ENCODE measurements at regions of chr4 and their contacts with region 1.

Region 1: DNA sequence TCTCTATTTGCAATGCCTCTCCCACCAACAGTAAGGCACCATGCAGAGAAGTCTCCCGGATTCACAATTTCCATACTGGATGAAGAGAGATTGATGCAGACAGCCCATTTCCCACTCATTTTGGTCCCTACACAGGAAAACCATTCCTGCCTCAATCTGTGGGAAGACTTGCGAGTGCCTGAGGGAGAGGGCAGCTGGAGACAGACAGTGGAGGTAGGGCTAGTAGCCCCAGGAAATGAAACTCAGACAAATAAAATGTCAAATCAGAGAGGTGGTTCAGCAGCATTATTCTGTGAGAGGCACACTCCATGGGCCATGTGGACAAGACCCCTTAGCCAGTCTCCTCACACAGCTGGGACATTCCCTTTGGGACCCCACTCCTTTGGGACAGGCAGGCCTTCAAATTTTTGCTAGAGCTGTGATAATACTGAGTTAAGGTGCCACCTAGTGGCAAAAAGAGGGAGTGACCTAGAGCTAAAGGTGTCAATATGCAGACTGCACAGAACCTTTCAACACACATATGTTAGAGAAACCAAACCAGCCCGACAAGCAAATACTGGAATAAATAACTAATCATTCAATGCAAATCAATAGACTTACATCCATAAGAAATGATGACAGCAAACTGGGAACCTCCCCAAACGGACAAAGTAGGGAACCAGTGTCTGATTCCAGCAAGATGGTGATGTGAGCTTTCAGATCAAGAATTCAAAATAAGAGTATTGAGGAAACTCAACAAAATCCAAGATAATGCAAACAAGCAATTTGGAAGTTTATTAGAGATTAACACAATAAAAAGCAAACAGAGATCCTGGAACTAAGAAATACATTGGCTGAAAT is 1865.3 kb upstream of the AGA start:
- DNase-seq: peak in 1 of 2 experiments; percentile 5
- H3K4me3 ChIP-seq: no peak overlapping the region
- H3K27ac ChIP-seq: no peak overlapping the region
- H3K4me1 ChIP-seq: no peaks in the 10 kb centered on the region
- H3K27me3 ChIP-seq: no peaks in the 10 kb centered on the region
- CTCF ChIP-seq: peak; percentile 75

Region 2: DNA sequence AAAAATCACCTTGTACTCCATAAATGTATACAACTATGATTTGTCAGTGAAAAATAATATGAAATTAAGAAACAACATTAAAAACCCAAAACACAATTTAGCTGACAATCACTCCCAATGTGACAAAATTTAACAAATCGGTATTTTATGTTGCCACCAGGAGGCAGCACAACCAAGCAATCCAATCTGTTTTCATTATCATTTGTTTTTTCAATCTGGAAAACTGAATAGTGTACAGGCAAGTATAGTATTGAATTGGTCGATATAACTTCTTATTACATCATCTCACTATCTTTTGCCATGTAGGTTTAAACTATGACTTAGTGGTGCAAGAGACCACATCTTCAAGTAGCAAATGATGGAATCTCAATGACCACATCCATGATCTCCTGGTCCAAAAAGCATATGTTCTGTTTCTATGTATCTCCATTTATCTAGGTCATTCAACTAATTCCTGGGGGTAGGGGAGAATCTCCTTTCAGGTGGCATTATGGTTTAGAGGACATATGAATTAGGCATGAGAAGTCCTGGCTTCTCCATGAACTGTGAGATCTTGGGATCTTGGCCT is 1752.4 kb before region 1 on chr4:
- CTCF ChIA-PET with region 1: no interaction called
- POLR2A ChIA-PET with region 1: no interaction called
- intact Hi-C with region 1: loop called (anchors 2 kb)
- DNase-seq: peak in 1 of 2 experiments; percentile 28
- H3K4me3 ChIP-seq: no peak overlapping the region
- H3K27ac ChIP-seq: no peak overlapping the region
- H3K4me1 ChIP-seq: no peaks in the 10 kb centered on the region
- H3K27me3 ChIP-seq: no peaks in the 10 kb centered on the region
- CTCF ChIP-seq: peak; percentile 74

Region 3: GRCh38 chr4:179071131-179071530 is 236.4 kb before region 1 on chr4:
- CTCF ChIA-PET with region 1: no interaction called
- POLR2A ChIA-PET with region 1: no interaction called
- intact Hi-C with region 1: no loop called
- DNase-seq: no peak
- H3K4me3 ChIP-seq: no peak overlapping the region
- H3K27ac ChIP-seq: no peak overlapping the region
- H3K4me1 ChIP-seq: no peaks in the 10 kb centered on the region
- H3K27me3 ChIP-seq: no peaks in the 10 kb centered on the region
- CTCF ChIP-seq: no peak

Region 4: GRCh38 chr4:179145746-179146525 is 161.6 kb before region 1 on chr4:
- CTCF ChIA-PET with region 1: no interaction called
- POLR2A ChIA-PET with region 1: no interaction called
- intact Hi-C with region 1: no loop called
- DNase-seq: no peak
- H3K4me3 ChIP-seq: no peak overlapping the region
- H3K27ac ChIP-seq: no peak overlapping the region
- H3K4me1 ChIP-seq: no peaks in the 10 kb centered on the region
- H3K27me3 ChIP-seq: no peaks in the 10 kb centered on the region
- CTCF ChIP-seq: no peak

Region 5: DNA sequence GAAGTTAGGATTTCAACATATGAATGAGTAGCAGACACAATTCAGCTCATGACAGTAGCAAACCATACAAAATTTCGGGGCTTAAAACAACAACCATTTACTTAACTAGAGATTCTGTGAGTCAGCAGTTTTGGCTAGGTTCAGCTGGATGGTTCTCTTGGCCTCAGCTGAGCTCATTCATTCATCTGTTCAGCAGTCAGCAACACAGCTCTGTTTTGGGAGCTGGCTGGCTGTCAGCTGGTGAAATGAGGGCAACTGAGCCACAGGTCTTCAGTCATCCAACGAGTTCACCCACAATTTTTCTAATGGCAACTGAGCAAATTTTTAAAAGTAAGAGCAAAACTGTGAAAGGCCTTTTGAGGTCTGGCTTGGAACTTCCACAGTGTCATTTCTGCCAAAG is 139.8 kb after region 1 on chr4:
- CTCF ChIA-PET with region 1: no interaction called
- POLR2A ChIA-PET with region 1: no interaction called
- intact Hi-C with region 1: no loop called
- DNase-seq: no peak
- H3K4me3 ChIP-seq: no peak overlapping the region
- H3K27ac ChIP-seq: no peak overlapping the region
- H3K4me1 ChIP-seq: no peaks in the 10 kb centered on the region
- H3K27me3 ChIP-seq: no peaks in the 10 kb centered on the region
- CTCF ChIP-seq: no peak

Measured in PC-9 (cell line).